Body of pancreas (tissue), 4 donors: ENCODE measurements at regions of chr3 and their contacts with region 1.

Region 1: DNA sequence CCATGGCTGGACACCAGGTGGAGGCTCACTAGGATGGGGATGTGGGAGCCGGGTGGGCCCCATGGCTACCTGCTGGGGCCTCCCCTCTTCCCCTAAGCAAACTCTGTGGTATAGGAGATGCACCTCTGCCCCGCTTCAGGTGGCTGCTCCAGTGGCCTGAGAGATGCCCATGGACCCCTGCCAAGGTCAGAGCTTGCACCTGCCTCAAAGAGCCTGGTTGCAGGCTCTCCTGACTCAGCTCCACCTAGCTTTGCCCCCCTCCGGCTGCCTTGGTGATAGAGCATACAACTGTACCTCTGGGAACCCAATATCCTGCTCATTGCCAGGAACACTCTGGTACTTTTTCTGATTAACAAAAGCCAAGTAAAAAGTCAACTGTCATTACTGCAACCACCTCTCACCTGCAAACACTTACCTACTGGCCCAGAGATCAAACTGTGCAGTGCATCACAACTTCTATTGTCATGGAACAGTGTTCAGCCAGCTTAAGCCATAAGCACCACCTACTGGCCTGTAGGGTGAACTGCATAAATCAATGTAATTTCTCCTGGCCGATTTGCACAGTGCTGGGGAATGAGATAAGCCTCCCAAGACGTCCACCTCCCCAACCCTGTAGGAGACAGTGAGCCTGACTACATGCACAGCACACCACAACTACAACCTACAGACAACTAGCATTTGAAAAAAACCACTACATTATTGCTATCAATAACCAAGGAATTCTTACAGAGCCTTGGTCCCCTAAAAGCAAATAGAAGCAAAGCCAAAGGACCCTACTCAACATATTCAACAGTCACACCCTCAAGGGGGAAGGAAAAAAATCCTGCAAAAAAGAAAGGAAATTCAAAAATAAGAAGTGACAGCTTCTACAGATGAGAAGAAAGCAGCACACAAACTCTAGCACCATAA is 352.4 kb upstream of the ARHGEF26 start:
- DNase-seq: peak; percentile 21 to 56 (median 42)
- ATAC-seq: peak; percentile 77
- H3K4me3 ChIP-seq: no peak overlapping the region
- H3K27ac ChIP-seq: no peak overlapping the region
- H3K4me1 ChIP-seq: no peaks in the 10 kb centered on the region
- H3K27me3 ChIP-seq: no peaks in the 10 kb centered on the region
- CTCF ChIP-seq: peak; percentile 67 to 77 (median 72)
- POLR2A ChIP-seq: no peak

Region 2: DNA sequence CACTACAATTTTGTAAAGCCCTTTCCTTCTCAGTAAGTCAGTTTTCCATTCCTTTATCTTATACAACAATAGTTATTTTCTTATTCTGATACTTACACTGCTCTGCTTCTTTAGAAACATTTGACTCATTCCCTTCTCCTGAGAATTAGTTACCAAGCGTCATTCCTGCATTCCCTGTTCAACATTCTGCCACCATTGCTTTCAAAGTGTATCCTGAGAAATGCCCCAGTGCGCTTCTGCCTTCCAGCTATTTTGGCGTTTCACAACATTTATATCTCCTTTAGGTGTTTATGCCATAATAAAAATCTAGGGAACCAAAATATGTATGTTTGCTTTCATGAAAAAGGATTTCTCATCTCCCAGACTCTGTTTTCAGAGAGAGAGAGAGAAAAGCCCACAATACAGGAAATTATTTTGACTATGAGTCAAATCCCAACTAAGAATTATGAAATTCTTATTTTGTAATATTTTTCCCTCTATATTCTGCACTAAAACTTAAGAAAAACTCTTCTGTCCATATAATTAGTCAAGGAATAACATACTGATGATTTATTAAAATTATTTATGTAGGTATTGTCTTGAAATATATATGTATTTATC is 725.0 kb before region 1 on chr3:
- intact Hi-C with region 1: loop called (anchors 10 kb)
- DNase-seq: no peak
- ATAC-seq: no peak
- H3K4me3 ChIP-seq: no peak overlapping the region
- H3K27ac ChIP-seq: no peak overlapping the region
- H3K4me1 ChIP-seq: no peaks in the 10 kb centered on the region
- H3K27me3 ChIP-seq: no peaks in the 10 kb centered on the region
- CTCF ChIP-seq: no peak
- POLR2A ChIP-seq: no peak

Region 3: GRCh38 chr3:153513236-153513635 is 255.6 kb before region 1 on chr3:
- intact Hi-C with region 1: no loop called
- DNase-seq: no peak
- ATAC-seq: no peak
- H3K4me3 ChIP-seq: no peak overlapping the region
- H3K27ac ChIP-seq: no peak overlapping the region
- H3K4me1 ChIP-seq: no peaks in the 10 kb centered on the region
- H3K27me3 ChIP-seq: no peaks in the 10 kb centered on the region
- CTCF ChIP-seq: no peak
- POLR2A ChIP-seq: no peak